ENCODE measurements at regions of chr2 and their contacts with region 1.

Region 1: DNA sequence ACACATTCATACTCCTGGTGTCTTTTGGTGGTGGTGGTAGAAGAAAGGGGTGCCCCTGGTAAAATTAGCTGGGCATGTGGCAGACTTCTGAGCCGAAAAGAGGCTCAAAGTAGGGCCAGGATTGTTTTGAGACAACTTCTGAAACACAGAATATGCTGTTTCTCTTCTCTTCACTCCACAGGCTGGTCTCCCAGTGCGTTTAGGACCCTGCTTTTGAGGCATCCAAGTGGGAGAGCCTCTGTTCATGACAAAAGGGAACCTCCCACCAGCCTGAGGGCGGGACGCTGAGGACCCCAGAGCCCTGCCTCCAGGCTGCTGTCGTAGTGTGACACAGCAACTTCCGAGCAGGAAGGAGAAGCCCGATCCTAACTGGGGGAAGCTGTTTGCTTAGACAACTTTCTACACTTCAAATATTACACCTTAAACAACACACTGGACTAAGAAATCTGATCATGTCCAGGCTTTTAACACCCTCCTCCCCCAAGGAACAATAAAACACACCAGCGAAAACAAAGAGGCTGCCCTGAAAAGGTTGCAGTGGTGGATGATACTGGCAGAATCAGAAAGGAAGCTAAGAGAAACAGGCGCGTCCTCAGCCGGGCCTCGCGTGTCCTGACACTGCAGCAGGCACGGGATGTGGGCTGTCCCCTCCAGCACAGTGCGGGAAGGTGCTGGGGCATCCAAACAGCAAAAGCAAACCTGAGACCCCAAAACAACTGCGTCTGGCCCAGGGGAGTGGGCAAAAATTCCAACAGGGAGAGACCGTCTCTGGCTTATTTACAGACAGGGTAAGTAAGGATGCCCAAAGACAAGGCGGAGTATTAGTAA is 9.3 kb downstream of the SERTAD2 start:
- DNase-seq: peak; percentile 92
- ATAC-seq: peak; percentile 92

Region 2: GRCh38 chr2:64586883-64587481 is 57.4 kb before region 1 on chr2:
- intact Hi-C with region 1: loop called (anchors 5 kb)
- DNase-seq: no peak
- ATAC-seq: peak; percentile 48

Region 3: GRCh38 chr2:64609227-64609941 is 35.0 kb before region 1 on chr2:
- intact Hi-C with region 1: loop called (anchors 5 kb)
- DNase-seq: peak; percentile 88
- ATAC-seq: peak; percentile 73

Region 4: GRCh38 chr2:64831134-64831976 is 187.0 kb after region 1 on chr2:
- intact Hi-C with region 1: loop called (anchors 1 kb)
- DNase-seq: peak; percentile 93
- ATAC-seq: peak; percentile 97

Region 5: DNA sequence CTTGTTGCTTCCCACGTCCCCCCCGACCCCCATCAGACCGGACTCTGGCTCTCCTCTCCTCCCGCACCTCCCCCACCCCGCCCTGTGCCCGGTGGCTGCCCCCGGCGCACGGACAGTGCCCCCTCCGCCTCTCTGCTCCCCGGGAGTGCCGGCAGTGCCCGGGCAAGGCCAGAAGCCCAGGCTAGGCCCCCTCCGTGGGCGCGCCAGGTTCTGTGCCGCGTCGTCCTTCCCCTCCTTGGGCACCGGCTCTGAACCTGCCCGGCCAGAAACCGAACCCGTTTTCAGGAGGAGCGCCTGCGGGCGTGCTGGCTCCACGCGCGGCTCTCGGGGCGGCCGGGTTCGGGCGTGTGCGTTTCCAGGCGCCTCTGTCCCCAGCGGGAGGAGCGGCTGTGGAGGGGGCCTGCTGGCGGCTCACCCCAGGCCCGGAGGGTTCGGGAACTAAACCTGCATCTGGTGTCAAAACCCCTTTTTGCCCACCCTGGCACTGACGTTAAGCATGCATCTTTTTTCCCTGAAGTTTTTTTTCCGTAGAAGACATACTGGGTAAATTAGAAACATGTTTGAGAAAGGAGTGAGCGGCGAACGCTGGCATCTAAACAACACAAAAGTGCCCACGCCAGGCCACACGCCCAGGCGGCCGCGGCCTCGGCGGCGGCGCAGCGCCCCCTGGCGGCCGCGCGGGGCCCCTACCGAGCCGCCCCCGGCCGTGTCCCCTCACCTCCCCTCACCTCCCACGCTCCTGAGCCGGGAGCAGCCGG is 220.9 kb after region 1 on chr2:
- intact Hi-C with region 1: loop called (anchors 1 kb)
- DNase-seq: peak; percentile 86
- ATAC-seq: peak; percentile 87

Measured in Right ventricle myocardium inferior (tissue), 1 donor.